ENCODE measurements at regions of chr14 and their contacts with region 1.

Region 1: GRCh38 chr14:54773171-54773975 is 129.3 kb downstream of the GCH1 start:
- DNase-seq: peak; percentile 98
- ATAC-seq: peak; percentile 87
- H3K4me3 ChIP-seq: peak overlapping the region; percentile 15 to 40
- H3K27ac ChIP-seq: peak overlapping the region; percentile 77
- H3K4me1 ChIP-seq: peaks cover 20 to 29% of the 10 kb centered on the region in 2 experiments
- H3K27me3 ChIP-seq: no peaks in the 10 kb centered on the region
- CTCF ChIP-seq: peak; percentile 50 to 92 (median 63); a peak in 5 of 6 replicates
- POLR2A ChIP-seq: no peak
- RAD21 ChIP-seq: peak; percentile 92

Region 2: DNA sequence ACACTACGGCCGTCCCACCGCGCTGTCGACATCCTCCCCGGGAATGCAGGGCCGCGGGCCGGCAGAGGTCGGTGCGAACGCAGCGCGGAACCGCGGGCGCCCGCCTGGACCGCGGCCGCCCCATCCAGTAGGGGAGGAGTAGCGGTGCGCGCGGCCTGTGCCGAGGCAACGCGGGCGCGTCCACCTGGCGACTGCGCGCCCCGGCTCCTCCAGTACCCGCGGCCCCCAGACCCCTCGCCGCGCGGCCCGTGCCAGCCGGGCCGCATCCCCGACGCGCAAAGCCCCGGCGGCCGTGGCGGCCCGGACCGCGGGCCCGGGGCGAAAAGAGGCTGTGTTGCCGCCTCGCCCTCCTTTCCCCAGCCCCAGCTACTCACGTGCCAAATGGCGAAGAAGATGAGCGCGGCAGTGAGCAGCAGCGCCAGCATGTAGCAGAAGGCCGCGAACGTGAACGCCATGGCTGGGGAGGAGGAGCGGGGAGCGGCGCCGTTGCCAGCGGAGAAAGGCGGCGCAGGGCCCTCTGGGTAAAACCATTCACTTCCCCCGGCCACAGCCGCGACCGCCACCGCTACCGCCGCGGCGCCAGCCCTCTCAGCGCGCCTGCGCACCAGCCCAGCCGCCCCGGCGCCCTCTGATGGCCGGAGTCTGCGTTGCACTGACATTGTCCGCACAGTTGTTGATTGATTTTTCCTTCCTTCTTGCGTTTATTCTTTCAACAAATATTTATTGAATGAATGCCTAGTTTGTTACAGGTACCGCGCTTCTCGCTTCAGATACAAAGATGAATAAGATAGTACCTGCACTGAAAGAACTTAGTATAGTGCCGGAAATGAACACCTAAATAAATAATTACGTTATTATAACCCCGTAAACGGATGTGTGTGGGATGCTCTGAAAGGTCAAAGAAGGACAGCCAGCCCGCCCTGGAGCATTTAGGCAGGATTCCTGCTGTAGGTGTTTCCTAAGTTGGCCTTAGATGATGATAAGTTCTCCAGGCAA is 332.2 kb before region 1 on chr14 and contains the start of gene CNIH1:
- CTCF ChIA-PET with region 1: no interaction called
- POLR2A ChIA-PET with region 1: no interaction called
- RAD21 ChIA-PET with region 1: no interaction called
- intact Hi-C with region 1: loop called (anchors 1 kb)
- DNase-seq: peak; percentile 73
- ATAC-seq: peak; percentile 98
- H3K4me3 ChIP-seq: peak within 1 kb of the TSS; percentile 71 to 72
- H3K27ac ChIP-seq: peak within 1 kb of the TSS; percentile 97
- H3K4me1 ChIP-seq: peaks cover 13 to 28% of the 10 kb centered on the region in 2 experiments; a peak in 3 of 4 replicates
- H3K27me3 ChIP-seq: no peaks in the 10 kb centered on the region
- CTCF ChIP-seq: peak; percentile 55 to 90 (median 85); a peak in 5 of 6 replicates
- POLR2A ChIP-seq: peak; percentile 77
- RAD21 ChIP-seq: peak; percentile 30; the same call in 1 of the 2 replicates
- total RNA-seq, gene CNIH1: 149 TPM

Region 3: DNA sequence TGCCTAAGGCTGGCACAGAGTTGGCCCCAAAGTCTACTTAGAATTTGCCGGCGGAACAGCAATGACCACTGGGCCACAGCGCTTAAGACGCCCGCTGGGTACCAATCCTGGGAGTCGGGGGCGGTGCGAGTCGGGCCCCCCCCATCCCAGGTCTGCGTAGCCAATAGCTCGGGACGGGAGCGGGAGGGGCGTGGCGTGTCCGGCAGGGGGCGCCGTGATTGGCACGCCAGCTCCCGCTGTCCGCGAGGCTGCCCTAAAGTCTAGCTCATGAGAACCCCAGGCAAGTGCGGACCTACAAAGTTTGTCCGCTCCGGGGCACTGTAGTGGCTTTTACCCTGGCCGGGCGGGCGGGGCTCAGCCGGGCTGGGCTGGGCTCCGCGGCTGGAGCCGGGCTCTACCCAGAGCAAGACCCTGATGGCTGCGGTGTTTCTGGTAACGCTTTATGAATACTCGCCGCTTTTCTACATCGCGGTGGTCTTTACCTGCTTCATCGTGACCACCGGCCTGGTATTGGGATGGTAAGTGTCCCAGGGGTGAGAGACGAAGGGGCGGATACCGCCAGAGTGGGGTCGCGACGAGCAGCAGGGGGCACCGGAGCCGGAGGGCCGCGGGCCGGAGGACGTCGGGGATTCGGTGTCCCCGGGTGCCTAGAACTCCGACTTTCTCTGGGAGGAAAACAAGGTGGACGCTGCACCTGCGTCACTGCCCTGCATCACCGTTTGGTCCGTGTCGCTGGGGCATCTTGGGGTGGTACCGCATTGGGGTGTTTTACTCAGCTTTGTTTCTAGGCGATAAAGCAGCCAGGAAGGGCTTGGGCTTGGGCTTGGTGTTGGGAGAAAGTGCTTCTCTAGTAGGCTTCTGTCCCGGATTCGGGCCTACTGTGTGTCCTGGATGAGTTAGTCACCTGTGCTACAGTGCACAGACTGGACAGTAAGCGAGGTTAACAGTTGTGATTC is 263.5 kb before region 1 on chr14 and contains the start of gene CGRRF1:
- CTCF ChIA-PET with region 1: interaction called, 8 read pairs
- POLR2A ChIA-PET with region 1: no interaction called
- RAD21 ChIA-PET with region 1: interaction called in 1 of 2 experiments, 3 read pairs
- intact Hi-C with region 1: loop called (anchors 5 kb)
- DNase-seq: peak; percentile 96
- ATAC-seq: peak; percentile 99
- H3K4me3 ChIP-seq: peak within 1 kb of the TSS; percentile 60 to 84
- H3K27ac ChIP-seq: peak within 1 kb of the TSS; percentile 49; the same call in 1 of the 2 replicates
- H3K4me1 ChIP-seq: peaks cover 5 to 18% of the 10 kb centered on the region in 2 experiments; a peak in 3 of 4 replicates
- H3K27me3 ChIP-seq: no peaks in the 10 kb centered on the region
- CTCF ChIP-seq: peak in 1 of 3 experiments; percentile 19; a peak in 2 of 6 replicates
- POLR2A ChIP-seq: peak; percentile 66
- RAD21 ChIP-seq: no peak
- total RNA-seq, gene CGRRF1: 15.9 TPM

Region 4: GRCh38 chr14:54691525-54692283 is 81.7 kb before region 1 on chr14:
- CTCF ChIA-PET with region 1: interaction called, 5 read pairs
- POLR2A ChIA-PET with region 1: no interaction called
- RAD21 ChIA-PET with region 1: no interaction called
- intact Hi-C with region 1: loop called (anchors 5 kb)
- DNase-seq: peak; percentile 53
- ATAC-seq: peak; percentile 98
- H3K4me3 ChIP-seq: no peak overlapping the region
- H3K27ac ChIP-seq: no peak overlapping the region
- H3K4me1 ChIP-seq: no peaks in the 10 kb centered on the region
- H3K27me3 ChIP-seq: no peaks in the 10 kb centered on the region
- CTCF ChIP-seq: peak; percentile 79 to 89 (median 87)
- POLR2A ChIP-seq: no peak
- RAD21 ChIP-seq: peak; percentile 88

Region 5: GRCh38 chr14:54730156-54730961 is 43.0 kb before region 1 on chr14:
- CTCF ChIA-PET with region 1: no interaction called
- POLR2A ChIA-PET with region 1: no interaction called
- RAD21 ChIA-PET with region 1: no interaction called
- intact Hi-C with region 1: no loop called
- DNase-seq: no peak
- ATAC-seq: no peak
- H3K4me3 ChIP-seq: no peak overlapping the region
- H3K27ac ChIP-seq: no peak overlapping the region
- H3K4me1 ChIP-seq: no peaks in the 10 kb centered on the region
- H3K27me3 ChIP-seq: no peaks in the 10 kb centered on the region
- CTCF ChIP-seq: no peak
- POLR2A ChIP-seq: no peak
- RAD21 ChIP-seq: no peak